ENCODE measurements at regions of chr16 and their contacts with region 1.

Region 1: DNA sequence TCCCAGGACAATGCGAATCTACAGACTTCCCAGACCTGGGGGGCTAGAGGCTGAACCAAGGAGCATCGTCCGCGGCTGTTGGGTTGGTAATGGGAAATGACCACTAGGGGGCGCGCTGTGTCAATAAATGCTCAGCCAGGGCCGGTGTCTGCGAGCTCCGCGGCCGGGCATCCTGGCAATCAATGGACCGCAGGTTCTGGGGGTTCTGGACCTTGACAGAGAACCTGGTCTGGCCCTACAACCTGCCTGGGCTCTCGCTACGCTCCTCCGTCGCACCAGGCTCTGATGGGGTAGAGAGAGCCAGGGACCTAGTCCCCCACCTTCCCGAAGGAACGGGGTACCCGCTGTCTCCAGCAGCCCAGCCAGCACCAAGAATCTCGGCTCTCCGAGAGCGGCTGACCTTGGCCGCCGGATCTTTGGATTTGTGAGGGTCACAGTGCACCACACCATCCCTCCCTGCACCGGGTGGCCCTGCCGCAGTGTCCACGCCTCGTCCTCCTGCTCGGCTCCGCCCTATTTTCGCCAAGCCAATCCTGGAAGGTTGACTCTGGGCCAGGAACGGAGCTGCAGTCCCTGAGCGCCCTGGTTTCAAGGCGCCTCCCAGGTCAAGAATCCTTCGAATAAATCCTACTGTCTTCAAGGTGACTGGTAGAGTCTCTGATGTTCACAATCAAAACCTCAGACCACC is 20.4 kb upstream of the BEAN1 start:
- DNase-seq: peak; percentile 76 to 85 (median 81)
- H3K4me3 ChIP-seq: peak overlapping the region; percentile 57 to 62
- H3K4me3 Mint-ChIP-seq: peak overlapping the region; percentile 86 to 94 (median 89)
- H3K27ac ChIP-seq: no peak overlapping the region
- H3K27ac Mint-ChIP-seq: peak overlapping the region in 6 of 7 donors; percentile 64 to 76 (median 68)
- H3K4me1 ChIP-seq: peaks cover 32% of the 10 kb centered on the region
- H3K4me1 Mint-ChIP-seq: peaks cover 17 to 37% (median 28%) of the 10 kb centered on the region in 4 donors
- H3K27me3 ChIP-seq: no peaks in the 10 kb centered on the region
- H3K27me3 Mint-ChIP-seq: peaks cover 6% of the 10 kb centered on the region in 2 donors

Region 2: DNA sequence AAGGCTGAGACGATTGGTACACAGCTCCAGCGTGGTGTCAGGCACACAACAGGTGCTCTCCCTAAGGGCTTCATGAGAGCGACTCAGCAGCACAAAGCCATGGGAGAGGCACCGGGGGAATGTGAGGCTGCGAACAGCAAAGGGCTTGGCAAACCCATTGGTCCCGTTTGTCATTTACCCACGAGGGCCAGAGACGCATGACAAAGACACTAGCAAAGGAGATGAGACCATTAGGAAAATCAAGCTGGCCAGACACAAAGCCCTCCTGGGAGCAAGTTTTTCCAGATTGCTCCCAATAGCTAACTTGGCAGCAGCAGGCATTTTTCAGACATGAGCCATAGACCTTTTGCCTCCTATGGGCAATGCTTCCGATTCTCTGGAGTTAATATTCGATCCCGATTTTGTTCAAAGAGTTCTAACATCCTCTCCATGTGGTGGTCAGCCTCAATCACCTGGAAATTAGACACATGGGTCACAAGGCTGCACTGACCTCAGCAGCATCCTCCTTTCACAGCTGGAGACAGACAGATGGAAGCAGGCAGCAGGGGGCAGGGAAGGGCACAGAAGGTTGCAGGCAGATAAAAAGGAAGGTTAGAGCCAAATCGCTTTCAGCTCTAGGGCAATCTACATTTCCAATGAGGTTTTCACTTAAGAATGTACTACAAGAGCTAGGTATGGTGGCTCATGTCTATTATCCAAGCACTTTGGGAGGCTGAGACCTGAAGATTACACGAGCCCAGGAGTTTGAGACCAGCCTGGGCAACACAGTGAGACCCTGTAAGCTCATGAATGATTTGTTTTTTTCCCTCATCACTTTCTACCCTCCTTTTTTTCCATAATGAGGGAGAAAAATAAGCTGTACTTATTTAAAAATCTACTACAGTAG is 105.2 kb after region 1 on chr16:
- CTCF ChIA-PET with region 1: interaction called, 17 read pairs
- POLR2A ChIA-PET with region 1: no interaction called
- intact Hi-C with region 1: no loop called
- DNase-seq: no peak
- H3K4me3 ChIP-seq: no peak overlapping the region
- H3K4me3 Mint-ChIP-seq: peak overlapping the region in 1 of 8 donors; percentile 50
- H3K27ac ChIP-seq: no peak overlapping the region
- H3K27ac Mint-ChIP-seq: peak overlapping the region in 5 of 7 donors; percentile 13 to 79 (median 30)
- H3K4me1 ChIP-seq: peaks cover 39% of the 10 kb centered on the region
- H3K4me1 Mint-ChIP-seq: peaks cover 23 to 51% (median 32%) of the 10 kb centered on the region in 4 donors
- H3K27me3 ChIP-seq: no peaks in the 10 kb centered on the region
- H3K27me3 Mint-ChIP-seq: no peaks in the 10 kb centered on the region

Region 3: GRCh38 chr16:66588981-66589713 is 182.5 kb after region 1 on chr16:
- CTCF ChIA-PET with region 1: interaction called, 62 read pairs
- POLR2A ChIA-PET with region 1: interaction called, 20 read pairs
- intact Hi-C with region 1: loop called (anchors 1 kb)
- DNase-seq: peak; percentile 64 to 74 (median 70)
- H3K4me3 ChIP-seq: no peak overlapping the region
- H3K4me3 Mint-ChIP-seq: peak overlapping the region; percentile 80 to 94 (median 87)
- H3K27ac ChIP-seq: no peak overlapping the region
- H3K27ac Mint-ChIP-seq: peak overlapping the region; percentile 48 to 96 (median 77)
- H3K4me1 ChIP-seq: peaks cover 20% of the 10 kb centered on the region
- H3K4me1 Mint-ChIP-seq: peaks cover 13 to 23% (median 19%) of the 10 kb centered on the region in 4 donors
- H3K27me3 ChIP-seq: no peaks in the 10 kb centered on the region
- H3K27me3 Mint-ChIP-seq: no peaks in the 10 kb centered on the region

Region 4: GRCh38 chr16:66728117-66728787 is 321.6 kb after region 1 on chr16:
- CTCF ChIA-PET with region 1: interaction called, 27 read pairs
- POLR2A ChIA-PET with region 1: no interaction called
- intact Hi-C with region 1: loop called (anchors 1 kb)
- DNase-seq: peak in 4 of 5 donors; percentile 42 to 56 (median 46)
- H3K4me3 ChIP-seq: no peak overlapping the region
- H3K4me3 Mint-ChIP-seq: no peak overlapping the region
- H3K27ac ChIP-seq: no peak overlapping the region
- H3K27ac Mint-ChIP-seq: peak overlapping the region in 5 of 7 donors; percentile 12 to 73 (median 52)
- H3K4me1 ChIP-seq: no peaks in the 10 kb centered on the region
- H3K4me1 Mint-ChIP-seq: peaks cover 3 to 6% (median 5%) of the 10 kb centered on the region in 4 donors
- H3K27me3 ChIP-seq: no peaks in the 10 kb centered on the region
- H3K27me3 Mint-ChIP-seq: no peaks in the 10 kb centered on the region

Region 5: GRCh38 chr16:66751303-66751991 is 344.8 kb after region 1 on chr16 and contains the start of gene DYNC1LI2:
- CTCF ChIA-PET with region 1: interaction called, 14 read pairs
- POLR2A ChIA-PET with region 1: interaction called, 8 read pairs
- intact Hi-C with region 1: loop called (anchors 2 kb)
- DNase-seq: peak; percentile 82 to 91 (median 87)
- H3K4me3 ChIP-seq: peak within 1 kb of the TSS; percentile 64 to 73
- H3K4me3 Mint-ChIP-seq: peak within 1 kb of the TSS; percentile 91 to 95 (median 93)
- H3K27ac ChIP-seq: peak within 1 kb of the TSS; percentile 85
- H3K27ac Mint-ChIP-seq: peak within 1 kb of the TSS; percentile 85 to 95 (median 94)
- H3K4me1 ChIP-seq: peaks cover 34% of the 10 kb centered on the region
- H3K4me1 Mint-ChIP-seq: peaks cover 31 to 46% (median 37%) of the 10 kb centered on the region in 4 donors
- H3K27me3 ChIP-seq: no peaks in the 10 kb centered on the region
- H3K27me3 Mint-ChIP-seq: peaks cover 0 to 4% of the 10 kb centered on the region in 2 donors
- total RNA-seq, gene DYNC1LI2: 73.2 to 78.1 TPM